Ovary (tissue), 10 donors: ENCODE measurements at regions of chr5 and their contacts with region 1.

Region 1: DNA sequence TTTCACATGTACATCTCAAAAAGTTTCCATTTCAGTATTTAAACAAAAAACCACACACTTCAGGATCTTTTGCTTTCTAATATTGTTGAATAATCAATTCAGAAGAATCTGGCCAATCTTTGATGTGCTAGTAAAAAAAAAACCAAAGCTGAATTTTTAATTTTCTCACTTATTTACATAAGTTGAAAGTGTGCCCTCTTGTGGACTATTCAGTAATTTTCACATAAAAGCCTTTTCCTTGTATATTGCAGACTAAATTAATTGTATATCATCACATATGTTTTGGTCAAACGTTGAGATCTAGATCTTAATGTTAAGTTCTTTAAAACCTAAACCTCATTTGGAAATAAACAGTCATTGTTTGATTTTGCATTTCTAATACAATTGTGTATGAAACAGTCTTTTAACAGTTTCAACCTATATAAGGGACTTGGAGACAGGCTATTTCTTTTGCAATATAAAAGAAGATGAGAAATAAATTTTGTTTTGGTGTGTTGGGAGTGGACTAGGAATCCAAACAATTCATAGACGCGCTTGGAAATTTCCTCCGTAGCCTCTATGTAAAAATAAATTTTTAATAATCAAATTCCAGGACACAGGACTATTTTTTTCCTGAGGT is 68.1 kb downstream of the NIPBL start:
- DNase-seq: no peak
- H3K4me3 ChIP-seq: no peak overlapping the region
- H3K27ac ChIP-seq: no peak overlapping the region
- H3K4me1 ChIP-seq: no peaks in the 10 kb centered on the region
- H3K27me3 ChIP-seq: no peaks in the 10 kb centered on the region
- CTCF ChIP-seq: no peak
- EP300 ChIP-seq: no peak
- POLR2A ChIP-seq: no peak

Region 2: DNA sequence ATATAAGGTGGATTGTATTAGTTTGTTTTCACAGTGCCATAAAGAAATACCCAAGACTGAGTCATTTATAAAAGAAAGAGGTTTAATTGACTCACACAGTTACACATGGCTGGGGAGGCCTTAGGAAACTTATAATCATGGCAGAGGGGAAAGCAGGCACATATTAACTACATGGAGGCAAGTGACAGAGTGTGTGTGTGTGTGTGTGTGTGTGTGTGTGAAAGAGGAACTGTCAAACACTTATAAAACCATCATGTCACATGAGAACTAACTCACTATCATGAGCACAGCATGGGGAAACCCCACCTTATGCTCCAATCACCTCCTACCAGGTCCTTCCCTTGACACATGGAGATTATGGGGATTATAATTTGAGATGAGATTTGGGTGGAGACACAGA is 1208.4 kb before region 1 on chr5:
- intact Hi-C with region 1: no loop called
- DNase-seq: no peak
- H3K4me3 ChIP-seq: no peak overlapping the region
- H3K27ac ChIP-seq: no peak overlapping the region
- H3K4me1 ChIP-seq: no peaks in the 10 kb centered on the region
- H3K27me3 ChIP-seq: no peaks in the 10 kb centered on the region
- CTCF ChIP-seq: no peak
- EP300 ChIP-seq: no peak
- POLR2A ChIP-seq: no peak

Region 3: GRCh38 chr5:36875790-36876388 is 68.8 kb before region 1 on chr5:
- intact Hi-C with region 1: loop called in 2 of 4 experiments (anchors 10 kb)
- DNase-seq: peak; percentile 76 to 86 (median 83)
- H3K4me3 ChIP-seq: peak overlapping the region; percentile 62
- H3K27ac ChIP-seq: peak overlapping the region; percentile 92 to 98
- H3K4me1 ChIP-seq: peaks cover 4% of the 10 kb centered on the region
- H3K27me3 ChIP-seq: no peaks in the 10 kb centered on the region
- CTCF ChIP-seq: peak; percentile 40 to 54 (median 40)
- EP300 ChIP-seq: no peak
- POLR2A ChIP-seq: peak; percentile 15